Heart right ventricle (tissue), 16 donors: ENCODE measurements at regions of chr11 and their contacts with region 1.

Region 1: GRCh38 chr11:116787786-116788486 is at the start of gene ZPR1:
- DNase-seq: peak; percentile 86 to 87
- ATAC-seq: peak; percentile 83 to 92 (median 90)
- H3K4me3 ChIP-seq: peak within 1 kb of the TSS; percentile 84 to 100 (median 94)
- H3K27ac ChIP-seq: peak within 1 kb of the TSS; percentile 2 to 94 (median 87)
- H3K4me1 ChIP-seq: peaks cover 7 to 35% (median 24%) of the 10 kb centered on the region in 9 donors
- H3K27me3 ChIP-seq: no peaks in the 10 kb centered on the region
- CTCF ChIP-seq: no peak
- total RNA-seq, gene ZPR1: 17.3 to 32.9 (median 22.6) TPM

Region 2: GRCh38 chr11:116715383-116715782 is 72.6 kb before region 1 on chr11:
- intact Hi-C with region 1: no loop called
- DNase-seq: no peak
- ATAC-seq: no peak
- H3K4me3 ChIP-seq: no peak overlapping the region
- H3K27ac ChIP-seq: no peak overlapping the region
- H3K4me1 ChIP-seq: no peaks in the 10 kb centered on the region
- H3K27me3 ChIP-seq: peaks cover 0 to 26% (median 9%) of the 10 kb centered on the region in 7 donors
- CTCF ChIP-seq: no peak

Region 3: GRCh38 chr11:116829525-116830183 is 41.7 kb after region 1 on chr11 and contains the start of gene APOC3:
- intact Hi-C with region 1: loop called in 2 of 10 experiments (anchors 2 to 5 kb)
- DNase-seq: no peak
- ATAC-seq: peak in 1 of 8 donors; percentile 7
- H3K4me3 ChIP-seq: no peak within 1 kb of the TSS
- H3K27ac ChIP-seq: no peak within 1 kb of the TSS
- H3K4me1 ChIP-seq: peaks cover 0 to 6% (median 2%) of the 10 kb centered on the region in 9 donors
- H3K27me3 ChIP-seq: no peaks in the 10 kb centered on the region
- CTCF ChIP-seq: no peak
- total RNA-seq, gene APOC3: 0.64 TPM in 1 of 10 donors, not detected in the others

Region 4: GRCh38 chr11:116879800-116880625 is 92.1 kb after region 1 on chr11:
- intact Hi-C with region 1: loop called in 1 of 10 experiments (anchors 10 kb)
- DNase-seq: peak in 1 of 2 donors; percentile 48
- ATAC-seq: peak; percentile 63 to 94 (median 90)
- H3K4me3 ChIP-seq: no peak overlapping the region
- H3K27ac ChIP-seq: no peak overlapping the region
- H3K4me1 ChIP-seq: peaks cover 0 to 21% (median 3%) of the 10 kb centered on the region in 9 donors
- H3K27me3 ChIP-seq: no peaks in the 10 kb centered on the region
- CTCF ChIP-seq: peak; percentile 25 to 86 (median 72)

Region 5: DNA sequence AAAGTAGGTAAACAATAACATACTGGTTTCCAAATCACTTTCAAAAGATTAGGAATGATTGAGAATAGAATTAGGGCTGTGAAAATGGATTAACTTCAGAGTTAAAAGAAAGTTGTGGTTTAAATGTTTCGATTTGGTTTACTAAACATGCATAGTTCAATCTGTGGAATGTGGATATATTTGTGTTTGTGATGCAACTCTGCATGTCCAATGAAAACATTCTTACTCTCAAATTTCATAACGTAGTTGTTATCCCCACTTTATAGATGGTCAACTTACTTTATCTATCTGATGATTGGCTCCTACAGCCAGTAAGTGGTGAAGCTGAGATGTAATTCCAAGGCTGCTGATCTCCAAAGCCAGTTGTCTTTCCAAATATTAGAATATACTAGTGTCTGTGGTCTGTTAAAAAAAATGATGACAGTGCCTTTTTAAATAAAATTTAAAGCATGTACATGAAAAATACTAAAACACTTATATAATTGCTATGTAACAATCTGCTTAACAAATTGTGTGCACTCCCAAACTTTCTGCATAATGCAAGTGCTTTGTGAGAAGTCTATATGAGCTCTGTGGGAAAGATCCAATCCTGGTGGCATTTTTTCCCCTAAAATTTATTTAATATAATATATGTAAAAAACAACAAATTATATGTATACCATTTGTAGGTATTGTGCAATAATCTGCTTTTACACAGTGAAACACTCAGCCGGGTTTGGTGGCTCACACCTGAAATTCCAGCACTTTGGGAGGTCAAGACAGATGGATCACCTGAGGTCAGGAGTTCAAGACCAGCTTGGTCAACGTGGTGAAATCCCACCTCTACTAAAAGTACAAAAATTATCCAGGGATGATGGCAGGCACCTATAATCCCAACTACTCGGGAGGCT is 320.0 kb after region 1 on chr11:
- intact Hi-C with region 1: loop called (anchors 1 to 5 kb)
- DNase-seq: no peak
- ATAC-seq: no peak
- H3K4me3 ChIP-seq: no peak overlapping the region
- H3K27ac ChIP-seq: peak overlapping the region in 3 of 10 donors; percentile 52 to 64 (median 56)
- H3K4me1 ChIP-seq: peaks cover 0 to 6% (median 0%) of the 10 kb centered on the region in 9 donors
- H3K27me3 ChIP-seq: no peaks in the 10 kb centered on the region
- CTCF ChIP-seq: peak in 1 of 9 donors; percentile 2

Region 6: GRCh38 chr11:117232092-117232878 is 444.3 kb after region 1 on chr11 and contains the start of gene RNF214:
- intact Hi-C with region 1: loop called in 8 of 10 experiments (anchors 2 to 10 kb)
- DNase-seq: peak; percentile 79 to 84
- ATAC-seq: peak; percentile 81 to 93 (median 88)
- H3K4me3 ChIP-seq: peak within 1 kb of the TSS; percentile 51 to 100 (median 82)
- H3K27ac ChIP-seq: peak within 1 kb of the TSS; percentile 96 to 100 (median 98)
- H3K4me1 ChIP-seq: peaks cover 8 to 34% (median 30%) of the 10 kb centered on the region in 9 donors
- H3K27me3 ChIP-seq: no peaks in the 10 kb centered on the region
- CTCF ChIP-seq: peak; percentile 78 to 99 (median 94)
- total RNA-seq, gene RNF214: 20.3 to 33.5 (median 27.6) TPM